ENCODE measurements at regions of chr19 and their contacts with region 1.

Region 1: GRCh38 chr19:22882792-22883191 is 50.7 kb downstream of the ZNF723 start:
- DNase-seq: no peak
- ATAC-seq: no peak
- H3K4me3 Mint-ChIP-seq: no peak overlapping the region
- H3K27ac Mint-ChIP-seq: no peak overlapping the region
- H3K4me1 Mint-ChIP-seq: no peaks in the 10 kb centered on the region
- H3K27me3 Mint-ChIP-seq: no peaks in the 10 kb centered on the region

Region 2: GRCh38 chr19:21698215-21698614 is 1184.6 kb before region 1 on chr19:
- CTCF ChIA-PET with region 1: no interaction called
- POLR2A ChIA-PET with region 1: no interaction called
- intact Hi-C with region 1: loop called in 1 of 2 experiments (anchors 10 kb)
- DNase-seq: no peak
- ATAC-seq: no peak
- H3K4me3 Mint-ChIP-seq: no peak overlapping the region
- H3K27ac Mint-ChIP-seq: no peak overlapping the region
- H3K4me1 Mint-ChIP-seq: no peaks in the 10 kb centered on the region
- H3K27me3 Mint-ChIP-seq: no peaks in the 10 kb centered on the region